ENCODE measurements at regions of chr12 and their contacts with region 1.

Region 1: GRCh38 chr12:14394317-14395073 is 29.0 kb downstream of the ATF7IP start:
- DNase-seq: peak; percentile 66
- ATAC-seq: peak; percentile 82
- H3K4me3 Mint-ChIP-seq: peak overlapping the region; percentile 71
- H3K27ac Mint-ChIP-seq: peak overlapping the region; percentile 96
- H3K4me1 Mint-ChIP-seq: peaks cover 78% of the 10 kb centered on the region
- H3K27me3 Mint-ChIP-seq: no peaks in the 10 kb centered on the region

Region 2: DNA sequence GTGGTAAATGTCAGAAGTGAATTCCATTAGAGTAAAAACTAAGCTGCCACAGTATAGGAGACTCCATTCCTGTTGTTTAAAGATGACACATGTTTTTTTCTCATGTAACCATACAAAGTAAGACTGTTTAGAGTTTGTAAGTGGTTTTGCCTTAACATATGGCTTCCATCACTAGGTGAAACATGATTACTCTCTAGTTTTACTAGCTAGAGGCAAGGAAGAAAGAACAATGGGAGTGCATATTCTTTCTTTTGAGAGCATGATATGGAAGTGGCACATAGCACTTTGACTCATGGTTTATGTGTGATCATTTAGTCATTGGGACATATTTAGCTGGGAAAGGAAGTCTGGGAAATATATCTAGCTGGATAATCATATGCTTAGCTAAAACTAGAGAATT is 21.3 kb before region 1 on chr12:
- CTCF ChIA-PET with region 1: interaction called, 10 read pairs
- POLR2A ChIA-PET with region 1: interaction called, 3 read pairs
- intact Hi-C with region 1: no loop called
- DNase-seq: no peak
- ATAC-seq: peak; percentile 27
- H3K4me3 Mint-ChIP-seq: peak overlapping the region; percentile 24
- H3K27ac Mint-ChIP-seq: peak overlapping the region; percentile 87
- H3K4me1 Mint-ChIP-seq: peaks cover 62% of the 10 kb centered on the region
- H3K27me3 Mint-ChIP-seq: no peaks in the 10 kb centered on the region

Region 3: GRCh38 chr12:14454098-14454907 is 59.8 kb after region 1 on chr12:
- CTCF ChIA-PET with region 1: interaction called, 4 read pairs
- POLR2A ChIA-PET with region 1: no interaction called
- intact Hi-C with region 1: loop called in 1 of 2 experiments (anchors 5 kb)
- DNase-seq: peak; percentile 42
- ATAC-seq: peak; percentile 92
- H3K4me3 Mint-ChIP-seq: no peak overlapping the region
- H3K27ac Mint-ChIP-seq: peak overlapping the region; percentile 78
- H3K4me1 Mint-ChIP-seq: peaks cover 46% of the 10 kb centered on the region
- H3K27me3 Mint-ChIP-seq: no peaks in the 10 kb centered on the region

Region 4: DNA sequence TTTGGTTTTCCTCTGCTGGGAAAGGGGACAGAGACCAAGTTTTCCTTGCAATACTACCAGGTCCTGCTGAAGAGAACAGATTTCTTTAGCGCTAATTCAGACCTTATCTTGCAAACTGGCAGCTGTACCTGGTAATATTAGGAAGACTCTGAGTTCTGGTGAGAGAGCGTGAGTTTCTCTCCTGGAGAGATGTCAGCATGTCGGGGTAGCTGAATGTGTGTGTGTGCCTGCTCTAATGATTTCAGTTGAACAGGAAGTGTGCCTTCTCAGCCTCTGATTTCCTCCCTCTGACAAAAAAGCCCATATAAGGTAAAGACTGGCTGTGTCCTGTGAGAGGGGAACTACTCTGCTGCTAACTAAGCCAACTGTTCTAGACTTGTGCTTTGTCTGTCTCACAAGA is 554.2 kb after region 1 on chr12:
- CTCF ChIA-PET with region 1: no interaction called
- POLR2A ChIA-PET with region 1: no interaction called
- intact Hi-C with region 1: loop called in 1 of 2 experiments (anchors 5 kb)
- DNase-seq: peak; percentile 68
- ATAC-seq: peak; percentile 82
- H3K4me3 Mint-ChIP-seq: peak overlapping the region; percentile 73
- H3K27ac Mint-ChIP-seq: peak overlapping the region; percentile 96
- H3K4me1 Mint-ChIP-seq: peaks cover 87% of the 10 kb centered on the region
- H3K27me3 Mint-ChIP-seq: no peaks in the 10 kb centered on the region